Activated CD4-positive, alpha-beta memory T cell treated with anti-CD3 and anti-CD28 coated beads, Interleukin-2, amount 10 ng/mL, durations not matched to agents 7 days and 5 days (primary cell): ENCODE measurements at regions of chr14 and their contacts with region 1.

Region 1: GRCh38 chr14:21498553-21499526 is 12.3 kb downstream of the METTL3 start:
- DNase-seq: no peak
- H3K4me3 Mint-ChIP-seq: no peak overlapping the region
- H3K27ac Mint-ChIP-seq: peak overlapping the region; percentile 27
- H3K4me1 Mint-ChIP-seq: peaks cover 24% of the 10 kb centered on the region
- H3K27me3 Mint-ChIP-seq: no peaks in the 10 kb centered on the region

Region 2: GRCh38 chr14:21419528-21419927 is 79.3 kb before region 1 on chr14:
- CTCF ChIA-PET with region 1: no interaction called
- POLR2A ChIA-PET with region 1: no interaction called
- DNase-seq: no peak
- H3K4me3 Mint-ChIP-seq: no peak overlapping the region
- H3K27ac Mint-ChIP-seq: no peak overlapping the region
- H3K4me1 Mint-ChIP-seq: peaks cover 15% of the 10 kb centered on the region
- H3K27me3 Mint-ChIP-seq: no peaks in the 10 kb centered on the region

Region 3: GRCh38 chr14:21486640-21487087 is 12.2 kb before region 1 on chr14:
- CTCF ChIA-PET with region 1: interaction called, 16 read pairs
- POLR2A ChIA-PET with region 1: interaction called, 5 read pairs
- DNase-seq: no peak
- H3K4me3 Mint-ChIP-seq: no peak overlapping the region
- H3K27ac Mint-ChIP-seq: no peak overlapping the region
- H3K4me1 Mint-ChIP-seq: peaks cover 1% of the 10 kb centered on the region
- H3K27me3 Mint-ChIP-seq: no peaks in the 10 kb centered on the region

Region 4: GRCh38 chr14:21557084-21557901 is 58.5 kb after region 1 on chr14:
- CTCF ChIA-PET with region 1: interaction called, 48 read pairs
- POLR2A ChIA-PET with region 1: interaction called, 10 read pairs
- DNase-seq: peak; percentile 75
- H3K4me3 Mint-ChIP-seq: peak overlapping the region; percentile 6
- H3K27ac Mint-ChIP-seq: no peak overlapping the region
- H3K4me1 Mint-ChIP-seq: peaks cover 7% of the 10 kb centered on the region
- H3K27me3 Mint-ChIP-seq: no peaks in the 10 kb centered on the region